Activated CD4-positive, alpha-beta memory T cell treated with anti-CD3 and anti-CD28 coated beads for 36 hours (primary cell): ENCODE measurements at regions of chr7 and their contacts with region 1.

Region 1: GRCh38 chr7:106112117-106112971 is at the start of gene SYPL1:
- DNase-seq: peak; percentile 95
- H3K4me3 Mint-ChIP-seq: peak within 1 kb of the TSS; percentile 85
- H3K27ac Mint-ChIP-seq: peak within 1 kb of the TSS; percentile 89
- H3K4me1 Mint-ChIP-seq: peaks cover 58% of the 10 kb centered on the region
- H3K27me3 Mint-ChIP-seq: no peaks in the 10 kb centered on the region
- total RNA-seq, gene SYPL1: 27.4 to 29.1 TPM

Region 2: GRCh38 chr7:105304040-105304895 is 808.1 kb before region 1 on chr7:
- CTCF ChIA-PET with region 1: no interaction called
- POLR2A ChIA-PET with region 1: no interaction called
- intact Hi-C with region 1: no loop called
- DNase-seq: peak; percentile 60
- H3K4me3 Mint-ChIP-seq: no peak overlapping the region
- H3K27ac Mint-ChIP-seq: peak overlapping the region; percentile 55
- H3K4me1 Mint-ChIP-seq: peaks cover 73% of the 10 kb centered on the region
- H3K27me3 Mint-ChIP-seq: no peaks in the 10 kb centered on the region

Region 3: GRCh38 chr7:105678811-105679495 is 433.4 kb before region 1 on chr7:
- CTCF ChIA-PET with region 1: no interaction called
- POLR2A ChIA-PET with region 1: no interaction called
- intact Hi-C with region 1: loop called (anchors 5 kb)
- DNase-seq: peak; percentile 54
- H3K4me3 Mint-ChIP-seq: peak overlapping the region; percentile 78
- H3K27ac Mint-ChIP-seq: peak overlapping the region; percentile 95
- H3K4me1 Mint-ChIP-seq: peaks cover 75% of the 10 kb centered on the region
- H3K27me3 Mint-ChIP-seq: no peaks in the 10 kb centered on the region

Region 4: DNA sequence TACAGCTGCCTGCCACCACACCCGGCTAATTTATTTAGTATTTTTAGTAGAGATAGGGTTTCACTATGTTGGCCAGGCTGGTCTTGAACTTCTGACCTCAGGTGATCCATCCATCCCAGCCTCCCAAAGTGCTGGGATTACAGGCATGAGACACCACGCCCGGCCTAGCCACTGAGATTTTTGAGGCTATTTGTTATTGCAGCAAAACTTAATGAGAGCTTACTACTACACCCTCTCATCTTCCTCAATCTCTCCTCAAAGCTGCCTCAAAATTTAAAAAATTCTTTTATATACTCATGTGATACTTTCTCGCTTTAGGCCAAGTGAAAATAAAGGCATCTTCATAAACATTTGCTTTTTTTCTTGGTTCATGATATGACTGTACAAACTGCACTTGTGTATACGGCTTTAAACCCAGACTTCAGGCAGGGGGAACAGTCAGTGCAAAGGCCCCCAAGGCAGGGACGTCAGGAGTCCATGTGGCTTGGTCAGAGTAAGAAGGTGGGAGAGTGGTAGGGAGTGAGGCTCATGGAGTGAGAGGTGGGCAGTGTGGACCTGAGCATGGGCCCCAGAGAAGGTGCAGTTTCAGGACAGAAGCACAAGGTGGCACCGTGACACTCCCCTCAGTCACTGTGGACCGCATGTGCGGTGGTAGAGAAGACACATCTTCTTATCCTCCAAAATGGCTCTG is 55.7 kb before region 1 on chr7:
- CTCF ChIA-PET with region 1: interaction called, 6 read pairs
- POLR2A ChIA-PET with region 1: no interaction called
- intact Hi-C with region 1: loop called (anchors 5 kb)
- DNase-seq: peak; percentile 80
- H3K4me3 Mint-ChIP-seq: no peak overlapping the region
- H3K27ac Mint-ChIP-seq: no peak overlapping the region
- H3K4me1 Mint-ChIP-seq: peaks cover 13% of the 10 kb centered on the region
- H3K27me3 Mint-ChIP-seq: no peaks in the 10 kb centered on the region

Region 5: DNA sequence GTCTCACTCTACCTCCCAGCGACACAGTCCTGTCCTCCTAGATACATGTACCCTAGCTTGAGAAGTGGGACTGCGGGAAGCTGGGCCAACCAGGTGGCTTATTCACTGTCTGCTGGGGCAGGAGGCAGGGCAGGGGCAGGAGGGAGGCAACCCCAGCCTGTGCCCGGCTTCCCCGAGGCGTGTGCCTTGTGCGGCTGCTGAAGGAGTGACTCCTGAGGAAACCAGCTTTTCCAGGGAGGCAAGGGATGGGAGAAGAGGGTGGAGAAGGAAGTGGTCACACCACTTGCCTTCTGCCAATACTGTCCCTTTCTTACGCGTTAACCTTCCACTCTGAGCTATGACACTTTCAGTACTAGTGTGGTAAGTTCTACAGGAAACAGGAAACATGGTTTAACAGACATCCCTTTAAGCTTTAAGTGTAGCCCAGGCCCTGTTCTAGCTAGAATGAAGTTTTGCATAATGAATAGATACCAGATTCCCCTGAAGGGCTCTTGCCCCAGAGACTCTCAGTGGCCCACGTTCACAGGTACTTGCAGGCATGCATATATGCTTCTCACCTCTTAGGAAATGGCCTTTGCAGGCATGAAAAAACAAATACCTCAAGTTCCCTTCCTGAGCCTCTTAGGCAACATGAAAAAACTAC is 40.9 kb before region 1 on chr7:
- CTCF ChIA-PET with region 1: interaction called, 3 read pairs
- POLR2A ChIA-PET with region 1: interaction called, 12 read pairs
- intact Hi-C with region 1: loop called (anchors 1 kb)
- DNase-seq: peak; percentile 67
- H3K4me3 Mint-ChIP-seq: peak overlapping the region; percentile 62
- H3K27ac Mint-ChIP-seq: peak overlapping the region; percentile 92
- H3K4me1 Mint-ChIP-seq: peaks cover 26% of the 10 kb centered on the region
- H3K27me3 Mint-ChIP-seq: no peaks in the 10 kb centered on the region

Region 6: GRCh38 chr7:106126170-106126938 is 14.0 kb after region 1 on chr7:
- CTCF ChIA-PET with region 1: interaction called, 9 read pairs
- POLR2A ChIA-PET with region 1: interaction called, 6 read pairs
- intact Hi-C with region 1: loop called (anchors 1 kb)
- DNase-seq: peak; percentile 56
- H3K4me3 Mint-ChIP-seq: peak overlapping the region; percentile 56
- H3K27ac Mint-ChIP-seq: peak overlapping the region; percentile 14
- H3K4me1 Mint-ChIP-seq: peaks cover 14% of the 10 kb centered on the region
- H3K27me3 Mint-ChIP-seq: peaks cover 3% of the 10 kb centered on the region

Region 7: DNA sequence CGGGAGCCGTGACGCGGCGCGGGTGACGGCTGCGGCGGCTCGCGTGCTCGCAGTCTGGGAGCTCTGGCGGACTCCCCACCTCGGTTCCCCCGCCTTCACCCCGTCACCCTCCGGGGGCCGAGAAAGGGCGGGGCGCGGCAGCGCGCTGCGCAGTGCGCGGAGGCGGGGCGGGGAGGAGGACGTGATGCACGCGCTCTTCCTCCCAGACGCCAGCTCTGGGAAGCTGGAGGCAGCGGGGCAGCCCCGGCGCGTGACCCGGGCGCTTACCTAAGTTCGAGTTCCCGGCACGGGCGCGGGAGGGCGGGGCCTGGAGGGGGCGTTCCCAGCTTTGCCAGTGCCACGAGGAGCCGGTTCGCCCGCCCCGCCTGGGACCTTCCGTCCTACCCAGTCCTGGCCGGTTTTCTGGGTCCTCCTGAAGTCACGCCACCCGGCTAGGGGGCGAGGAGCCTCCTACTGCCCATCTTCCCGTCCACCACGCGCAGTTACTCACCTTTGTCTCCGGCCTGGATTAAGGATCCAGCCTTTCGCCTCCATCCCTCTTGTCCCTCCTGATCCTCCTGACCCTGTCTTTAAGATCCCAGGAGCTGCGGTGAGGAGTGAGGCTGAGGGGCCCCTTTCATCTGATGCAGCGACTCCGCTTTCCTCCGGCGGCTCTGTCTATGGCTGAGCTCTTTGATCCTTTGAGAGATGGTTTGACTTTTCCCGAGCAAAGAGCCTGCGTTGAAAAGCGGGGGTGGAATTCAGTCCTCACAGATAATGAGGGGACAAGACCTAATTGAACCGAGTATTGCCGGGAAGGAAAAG is 172.9 kb after region 1 on chr7:
- CTCF ChIA-PET with region 1: no interaction called
- POLR2A ChIA-PET with region 1: interaction called, 5 read pairs
- intact Hi-C with region 1: loop called (anchors 2 kb)
- DNase-seq: peak; percentile 100
- H3K4me3 Mint-ChIP-seq: peak overlapping the region; percentile 92
- H3K27ac Mint-ChIP-seq: peak overlapping the region; percentile 99
- H3K4me1 Mint-ChIP-seq: peaks cover 50% of the 10 kb centered on the region
- H3K27me3 Mint-ChIP-seq: peaks cover 2% of the 10 kb centered on the region